ENCODE measurements at regions of chr5 and their contacts with region 1.

Region 1: GRCh38 chr5:132639706-132640130 is 18.3 kb upstream of the IL13 start:
- DNase-seq: peak; percentile 77
- H3K4me3 Mint-ChIP-seq: peak overlapping the region; percentile 52
- H3K27ac Mint-ChIP-seq: peak overlapping the region; percentile 86
- H3K4me1 Mint-ChIP-seq: peaks cover 72% of the 10 kb centered on the region
- H3K27me3 Mint-ChIP-seq: no peaks in the 10 kb centered on the region

Region 2: DNA sequence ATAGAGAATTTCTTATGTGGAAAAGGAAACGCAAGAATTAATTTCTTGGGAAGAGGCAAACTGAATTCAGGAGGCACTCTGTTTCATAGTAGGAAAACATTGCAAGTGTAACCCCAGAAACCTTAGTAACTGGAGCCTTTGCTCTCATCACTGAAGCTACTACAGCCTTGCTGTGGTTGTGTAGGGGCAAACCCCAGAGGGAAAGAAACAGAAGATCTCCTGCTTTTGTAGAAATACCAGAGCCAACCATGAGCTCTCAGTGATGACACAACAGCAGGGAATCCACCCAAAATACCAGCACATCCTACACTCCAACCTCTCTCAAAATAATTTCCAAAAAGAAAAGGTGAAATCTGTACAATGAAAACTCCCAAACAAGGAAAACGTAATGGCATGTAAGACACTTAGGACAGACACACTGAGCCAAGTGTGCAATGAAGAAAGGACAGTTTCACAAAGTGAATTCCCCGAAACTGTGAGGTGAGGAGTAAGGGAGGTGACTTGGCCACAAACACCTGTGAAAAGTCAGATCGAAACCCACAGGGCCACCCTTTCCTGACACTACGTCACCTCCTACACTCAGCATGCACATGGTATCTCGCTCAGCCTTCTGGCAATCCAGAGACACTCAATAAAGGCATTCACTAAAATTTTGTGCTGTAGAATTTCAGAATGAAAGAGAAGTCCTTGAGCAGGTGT is 619.7 kb before region 1 on chr5:
- intact Hi-C with region 1: loop called (anchors 5 kb)
- DNase-seq: peak; percentile 95
- H3K4me3 Mint-ChIP-seq: peak overlapping the region; percentile 49
- H3K27ac Mint-ChIP-seq: peak overlapping the region; percentile 87
- H3K4me1 Mint-ChIP-seq: peaks cover 45% of the 10 kb centered on the region
- H3K27me3 Mint-ChIP-seq: peaks cover 41% of the 10 kb centered on the region

Region 3: GRCh38 chr5:132363431-132364112 is 276.1 kb before region 1 on chr5:
- intact Hi-C with region 1: no loop called
- DNase-seq: no peak
- H3K4me3 Mint-ChIP-seq: no peak overlapping the region
- H3K27ac Mint-ChIP-seq: no peak overlapping the region
- H3K4me1 Mint-ChIP-seq: peaks cover 2% of the 10 kb centered on the region
- H3K27me3 Mint-ChIP-seq: peaks cover 2% of the 10 kb centered on the region

Region 4: GRCh38 chr5:132386644-132387286 is 253.0 kb before region 1 on chr5:
- intact Hi-C with region 1: no loop called
- DNase-seq: peak; percentile 93
- H3K4me3 Mint-ChIP-seq: no peak overlapping the region
- H3K27ac Mint-ChIP-seq: no peak overlapping the region
- H3K4me1 Mint-ChIP-seq: peaks cover 51% of the 10 kb centered on the region
- H3K27me3 Mint-ChIP-seq: no peaks in the 10 kb centered on the region

Region 5: GRCh38 chr5:132426525-132427138 is 213.1 kb before region 1 on chr5:
- intact Hi-C with region 1: loop called (anchors 5 kb)
- DNase-seq: peak; percentile 91
- H3K4me3 Mint-ChIP-seq: peak overlapping the region; percentile 81
- H3K27ac Mint-ChIP-seq: peak overlapping the region; percentile 96
- H3K4me1 Mint-ChIP-seq: peaks cover 92% of the 10 kb centered on the region
- H3K27me3 Mint-ChIP-seq: no peaks in the 10 kb centered on the region

Region 6: GRCh38 chr5:132622608-132623007 is 17.1 kb before region 1 on chr5:
- intact Hi-C with region 1: loop called (anchors 1 kb)
- DNase-seq: no peak
- H3K4me3 Mint-ChIP-seq: no peak overlapping the region
- H3K27ac Mint-ChIP-seq: peak overlapping the region; percentile 5
- H3K4me1 Mint-ChIP-seq: peaks cover 7% of the 10 kb centered on the region
- H3K27me3 Mint-ChIP-seq: no peaks in the 10 kb centered on the region

Region 7: GRCh38 chr5:132662925-132663770 is 23.4 kb after region 1 on chr5:
- intact Hi-C with region 1: loop called (anchors 1 kb)
- DNase-seq: peak; percentile 81
- H3K4me3 Mint-ChIP-seq: peak overlapping the region; percentile 67
- H3K27ac Mint-ChIP-seq: peak overlapping the region; percentile 85
- H3K4me1 Mint-ChIP-seq: peaks cover 66% of the 10 kb centered on the region
- H3K27me3 Mint-ChIP-seq: no peaks in the 10 kb centered on the region

Region 8: GRCh38 chr5:132688536-132689339 is 49.0 kb after region 1 on chr5:
- intact Hi-C with region 1: loop called (anchors 2 kb)
- DNase-seq: peak; percentile 69
- H3K4me3 Mint-ChIP-seq: peak overlapping the region; percentile 25
- H3K27ac Mint-ChIP-seq: peak overlapping the region; percentile 81
- H3K4me1 Mint-ChIP-seq: peaks cover 32% of the 10 kb centered on the region
- H3K27me3 Mint-ChIP-seq: no peaks in the 10 kb centered on the region

Region 9: GRCh38 chr5:132704875-132705274 is 65.2 kb after region 1 on chr5:
- intact Hi-C with region 1: no loop called
- DNase-seq: no peak
- H3K4me3 Mint-ChIP-seq: no peak overlapping the region
- H3K27ac Mint-ChIP-seq: no peak overlapping the region
- H3K4me1 Mint-ChIP-seq: peaks cover 23% of the 10 kb centered on the region
- H3K27me3 Mint-ChIP-seq: no peaks in the 10 kb centered on the region

Region 10: DNA sequence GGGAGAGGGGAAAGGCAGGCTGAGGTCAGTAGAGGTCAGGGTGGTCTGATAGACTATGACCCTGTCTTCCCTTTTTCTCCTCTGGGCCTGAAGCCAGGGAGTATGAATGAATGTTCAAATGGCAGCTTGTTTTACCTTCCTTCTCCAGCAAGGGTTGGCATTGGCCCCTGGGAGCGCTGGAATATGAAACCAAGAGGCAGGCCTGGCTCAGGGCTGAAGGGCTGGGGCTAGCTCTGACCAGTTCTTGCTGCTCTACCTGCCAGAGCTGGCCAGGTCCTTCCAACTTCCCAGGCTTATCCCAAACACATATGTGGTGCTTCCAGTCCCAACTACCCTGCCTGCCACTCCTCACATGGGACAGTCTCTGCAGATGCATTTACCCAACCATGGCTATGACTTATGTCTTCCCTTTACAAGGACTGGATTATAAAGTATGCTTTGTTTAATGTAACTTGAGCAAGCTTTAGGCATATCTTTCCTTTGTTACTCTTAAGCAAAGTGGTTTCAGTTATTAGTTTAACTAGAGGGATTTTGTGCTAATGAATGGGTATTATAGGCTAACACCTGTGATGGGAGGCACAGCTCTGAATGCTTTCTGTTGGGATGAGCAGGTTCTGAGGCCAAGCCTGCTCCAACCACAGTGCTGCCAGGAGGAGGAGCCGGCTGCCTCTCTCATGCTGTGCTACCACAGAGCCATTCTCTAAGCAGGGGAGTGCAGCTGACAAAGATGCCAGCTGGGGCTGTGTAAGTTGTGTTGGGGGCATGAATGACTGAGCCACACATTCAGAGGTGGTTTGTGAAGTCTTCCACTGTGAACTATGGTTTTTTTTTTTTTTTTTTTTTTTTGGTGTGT is 113.6 kb after region 1 on chr5:
- intact Hi-C with region 1: loop called (anchors 1 kb)
- DNase-seq: peak; percentile 74
- H3K4me3 Mint-ChIP-seq: no peak overlapping the region
- H3K27ac Mint-ChIP-seq: peak overlapping the region; percentile 82
- H3K4me1 Mint-ChIP-seq: peaks cover 57% of the 10 kb centered on the region
- H3K27me3 Mint-ChIP-seq: no peaks in the 10 kb centered on the region

Measured in activated CD4-positive, alpha-beta T cell treated with anti-CD3 and anti-CD28 coated beads, Interleukin-2, amount 10 ng/mL, durations not matched to agents 24 days and 14 days (primary cell).